SK-N-SH (cell line): ENCODE measurements at regions of chr5 and their contacts with region 1.

Region 1: GRCh38 chr5:170434966-170435605 is 45.9 kb upstream of the KCNMB1 start:
- DNase-seq: peak; percentile 85
- H3K4me3 ChIP-seq: peak overlapping the region in 1 of 2 experiments; percentile 38; a peak in 1 of 4 replicates
- H3K27ac ChIP-seq: no peak overlapping the region
- H3K4me1 ChIP-seq: peaks cover 0 to 8% of the 10 kb centered on the region in 2 experiments; a peak in 1 of 4 replicates
- H3K27me3 ChIP-seq: no peaks in the 10 kb centered on the region
- CTCF ChIP-seq: peak; percentile 97
- EP300 ChIP-seq: no peak
- RAD21 ChIP-seq: peak; percentile 95

Region 2: GRCh38 chr5:170420780-170421412 is 14.2 kb before region 1 on chr5:
- CTCF ChIA-PET with region 1: interaction called, 43 read pairs
- POLR2A ChIA-PET with region 1: no interaction called
- DNase-seq: peak; percentile 77
- H3K4me3 ChIP-seq: no peak overlapping the region
- H3K27ac ChIP-seq: no peak overlapping the region
- H3K4me1 ChIP-seq: peaks cover 0 to 9% of the 10 kb centered on the region in 2 experiments; a peak in 1 of 4 replicates
- H3K27me3 ChIP-seq: peaks cover 20% of the 10 kb centered on the region
- CTCF ChIP-seq: peak; percentile 84
- EP300 ChIP-seq: no peak
- RAD21 ChIP-seq: peak; percentile 79

Region 3: DNA sequence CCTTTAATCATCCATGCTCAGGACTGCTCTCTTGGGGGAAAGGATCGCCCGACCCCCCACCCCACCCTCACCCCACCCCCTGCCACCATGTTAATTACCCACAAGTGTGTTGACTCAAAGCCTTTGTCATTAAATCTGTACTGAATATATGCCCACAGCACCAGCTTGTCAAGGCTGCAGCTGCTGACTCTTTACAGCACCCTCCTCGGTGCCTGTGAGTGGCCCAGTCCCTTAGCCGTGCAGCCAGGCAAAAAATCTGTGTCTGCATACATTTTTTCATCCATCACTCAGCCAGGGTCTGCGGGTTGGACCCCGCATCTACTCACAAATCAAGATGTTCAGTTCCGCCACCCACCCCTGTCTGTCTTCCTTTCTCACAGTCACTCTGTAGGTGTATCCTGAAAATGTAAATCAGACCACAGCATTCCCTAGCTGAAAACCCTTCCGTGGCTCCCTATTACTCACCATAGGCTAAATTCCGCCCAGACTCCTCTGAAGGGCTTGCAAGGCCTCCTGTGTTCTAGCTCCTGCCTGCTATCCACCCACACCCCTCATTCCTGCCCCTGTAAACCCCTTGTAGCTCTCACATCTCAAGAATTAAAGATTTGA is 15.1 kb after region 1 on chr5:
- CTCF ChIA-PET with region 1: interaction called, 17 read pairs
- POLR2A ChIA-PET with region 1: no interaction called
- DNase-seq: no peak
- H3K4me3 ChIP-seq: no peak overlapping the region
- H3K27ac ChIP-seq: no peak overlapping the region
- H3K4me1 ChIP-seq: no peaks in the 10 kb centered on the region
- H3K27me3 ChIP-seq: no peaks in the 10 kb centered on the region
- CTCF ChIP-seq: no peak
- EP300 ChIP-seq: no peak
- RAD21 ChIP-seq: no peak

Region 4: GRCh38 chr5:170603578-170604565 is 168.8 kb after region 1 on chr5:
- CTCF ChIA-PET with region 1: interaction called, 134 read pairs
- POLR2A ChIA-PET with region 1: no interaction called
- DNase-seq: peak; percentile 84
- H3K4me3 ChIP-seq: no peak overlapping the region
- H3K27ac ChIP-seq: no peak overlapping the region
- H3K4me1 ChIP-seq: peaks cover 0 to 25% of the 10 kb centered on the region in 2 experiments; a peak in 1 of 4 replicates
- H3K27me3 ChIP-seq: peaks cover 14% of the 10 kb centered on the region; the same call in 1 of the 2 replicates
- CTCF ChIP-seq: peak; percentile 79
- EP300 ChIP-seq: no peak
- RAD21 ChIP-seq: peak; percentile 89

Region 5: DNA sequence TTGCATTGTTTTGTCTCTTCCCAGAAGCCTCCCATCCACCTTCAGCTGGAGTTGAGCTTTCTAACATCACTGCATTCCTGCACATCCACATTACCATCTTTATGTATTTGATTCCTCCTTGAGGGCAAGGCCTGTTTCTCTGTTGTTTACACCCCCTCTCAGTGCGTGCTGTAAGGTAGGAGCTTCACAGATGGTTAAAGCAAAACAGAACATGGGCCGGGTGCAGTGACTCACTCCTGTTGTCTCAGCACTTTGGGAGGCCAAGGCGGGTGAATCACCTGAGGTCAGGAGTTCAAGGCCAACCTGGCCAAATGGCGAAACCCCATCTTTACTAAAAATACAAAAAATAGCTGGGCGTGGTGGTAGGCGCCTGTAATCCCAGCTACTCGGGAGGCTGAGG is 179.6 kb after region 1 on chr5:
- CTCF ChIA-PET with region 1: interaction called, 202 read pairs
- POLR2A ChIA-PET with region 1: no interaction called
- DNase-seq: no peak
- H3K4me3 ChIP-seq: no peak overlapping the region
- H3K27ac ChIP-seq: no peak overlapping the region; a peak in 2 of 4 replicates
- H3K4me1 ChIP-seq: peaks cover 4 to 37% of the 10 kb centered on the region in 2 experiments; a peak in 2 of 4 replicates
- H3K27me3 ChIP-seq: no peaks in the 10 kb centered on the region
- CTCF ChIP-seq: no peak
- EP300 ChIP-seq: peak in 1 of 2 experiments; percentile 53; a peak in 1 of 4 replicates
- RAD21 ChIP-seq: no peak

Region 6: DNA sequence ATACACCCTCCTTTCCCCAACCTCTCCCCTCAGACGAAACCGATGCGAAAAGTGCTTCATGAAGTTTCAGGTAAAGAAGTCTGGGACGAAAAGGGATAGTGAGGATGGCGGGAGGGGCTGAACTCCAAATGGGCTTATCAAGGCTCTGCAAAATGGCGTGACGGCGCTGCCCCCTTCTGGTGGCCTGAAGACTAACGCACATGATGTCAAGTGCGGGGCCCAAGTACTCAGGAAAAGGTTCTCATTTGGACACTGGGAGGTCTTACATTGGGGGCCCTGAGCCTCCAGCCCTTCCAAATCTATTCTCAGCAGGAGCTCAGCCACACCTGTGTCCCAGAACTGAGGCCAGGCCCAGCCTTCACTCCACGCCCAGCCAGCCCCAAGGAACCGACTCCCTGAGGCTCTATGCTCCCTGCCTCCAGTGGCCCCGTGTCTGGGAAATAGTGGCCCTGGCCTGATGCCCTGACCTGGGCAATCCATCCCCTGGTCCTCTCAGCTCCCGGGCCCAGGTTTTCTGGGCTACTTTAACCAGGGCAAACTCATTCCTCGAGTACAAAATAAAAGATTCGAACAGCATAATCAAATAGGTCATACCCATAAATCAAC is 188.6 kb after region 1 on chr5:
- CTCF ChIA-PET with region 1: interaction called, 202 read pairs
- POLR2A ChIA-PET with region 1: no interaction called
- DNase-seq: peak; percentile 63
- H3K4me3 ChIP-seq: no peak overlapping the region; a peak in 1 of 4 replicates
- H3K27ac ChIP-seq: no peak overlapping the region
- H3K4me1 ChIP-seq: peaks cover 0 to 5% of the 10 kb centered on the region in 2 experiments; a peak in 1 of 4 replicates
- H3K27me3 ChIP-seq: no peaks in the 10 kb centered on the region
- CTCF ChIP-seq: peak; percentile 81
- EP300 ChIP-seq: no peak
- RAD21 ChIP-seq: peak; percentile 89